GM12878 (cell line): ENCODE measurements at regions of chrX and their contacts with region 1.

Region 1: GRCh38 chrX:37825209-37825842 is 22.0 kb downstream of the DYNLT3 start:
- DNase-seq: no peak
- ATAC-seq: peak; percentile 89
- H3K4me3 ChIP-seq: no peak overlapping the region
- H3K27ac ChIP-seq: no peak overlapping the region
- H3K4me1 ChIP-seq: peaks cover 7% of the 10 kb centered on the region
- H3K27me3 ChIP-seq: no peaks in the 10 kb centered on the region
- CTCF ChIP-seq: peak; percentile 81 to 98 (median 96)
- EP300 ChIP-seq: no peak
- POLR2A ChIP-seq: no peak
- RAD21 ChIP-seq: peak; percentile 99

Region 2: DNA sequence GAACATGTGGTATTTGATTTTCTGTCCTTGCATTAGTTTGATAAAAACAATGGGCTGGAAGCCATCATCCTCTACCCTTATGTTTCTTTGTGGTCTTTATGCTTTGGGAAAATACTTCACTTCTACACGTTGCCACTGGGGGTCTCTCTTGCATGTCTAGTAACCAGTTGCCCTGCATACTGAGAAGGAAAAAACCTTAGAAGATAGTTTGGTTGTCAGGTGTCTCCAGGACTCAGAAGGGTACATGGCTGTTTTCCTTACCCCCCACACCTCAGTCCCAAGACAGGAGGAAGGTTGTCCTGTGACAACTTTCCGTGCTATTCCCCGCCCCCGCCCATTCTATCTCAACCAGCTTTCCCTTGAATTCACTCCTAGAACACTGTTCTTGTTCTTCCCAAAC is 316.0 kb before region 1 on chrX:
- CTCF ChIA-PET with region 1: interaction called, 9 read pairs
- POLR2A ChIA-PET with region 1: no interaction called
- RAD21 ChIA-PET with region 1: no interaction called
- SMC1A ChIA-PET with region 1: interaction called, 11 read pairs
- in situ Hi-C with region 1: no loop called
- intact Hi-C with region 1: loop called (anchors 2 kb)
- DNase-seq: no peak
- ATAC-seq: peak; percentile 72
- H3K4me3 ChIP-seq: no peak overlapping the region
- H3K27ac ChIP-seq: no peak overlapping the region
- H3K4me1 ChIP-seq: no peaks in the 10 kb centered on the region
- H3K27me3 ChIP-seq: no peaks in the 10 kb centered on the region
- CTCF ChIP-seq: peak; percentile 17 to 37 (median 26); a peak in 2 of 6 replicates
- EP300 ChIP-seq: no peak
- POLR2A ChIP-seq: no peak
- RAD21 ChIP-seq: no peak

Region 3: GRCh38 chrX:37755025-37755424 is 70.3 kb before region 1 on chrX:
- CTCF ChIA-PET with region 1: interaction called, 16 read pairs
- POLR2A ChIA-PET with region 1: no interaction called
- RAD21 ChIA-PET with region 1: interaction called, 4 read pairs
- SMC1A ChIA-PET with region 1: interaction called, 8 read pairs
- in situ Hi-C with region 1: no loop called
- intact Hi-C with region 1: no loop called
- DNase-seq: peak; percentile 67
- ATAC-seq: peak; percentile 92
- H3K4me3 ChIP-seq: peak overlapping the region; percentile 10; the same call in 1 of the 2 replicates
- H3K27ac ChIP-seq: peak overlapping the region; percentile 87
- H3K4me1 ChIP-seq: peaks cover 32% of the 10 kb centered on the region
- H3K27me3 ChIP-seq: no peaks in the 10 kb centered on the region
- CTCF ChIP-seq: no peak
- EP300 ChIP-seq: peak in 1 of 2 experiments; percentile 57; a peak in 1 of 4 replicates
- POLR2A ChIP-seq: no peak
- RAD21 ChIP-seq: no peak

Region 4: DNA sequence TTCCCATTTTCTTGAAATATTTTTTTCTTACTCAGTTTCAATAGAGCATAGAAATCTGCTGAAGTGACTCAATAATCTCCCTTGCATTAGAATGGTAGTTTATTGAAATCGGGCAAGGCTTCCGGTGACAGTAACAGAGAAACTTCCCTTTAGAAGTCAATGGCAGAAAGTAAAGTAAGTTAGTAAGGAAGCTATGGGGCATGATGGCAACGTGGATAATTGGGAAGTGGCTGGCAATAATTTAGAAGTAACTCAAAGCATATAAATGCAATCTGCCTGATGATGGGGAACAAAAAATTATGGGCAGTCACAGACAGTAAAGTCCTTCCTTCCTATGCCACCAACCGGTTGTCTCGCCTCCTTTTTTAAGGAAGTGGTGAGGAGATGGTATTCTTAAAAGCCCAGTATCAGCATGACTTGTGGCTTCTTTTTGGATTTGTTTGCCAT is 37.9 kb before region 1 on chrX:
- CTCF ChIA-PET with region 1: interaction called, 73 read pairs
- POLR2A ChIA-PET with region 1: interaction called, 3 read pairs
- RAD21 ChIA-PET with region 1: interaction called, 29 read pairs
- SMC1A ChIA-PET with region 1: interaction called, 138 read pairs
- in situ Hi-C with region 1: no loop called
- intact Hi-C with region 1: loop called (anchors 2 kb)
- DNase-seq: no peak
- ATAC-seq: peak; percentile 62
- H3K4me3 ChIP-seq: peak overlapping the region; percentile 33
- H3K27ac ChIP-seq: peak overlapping the region; percentile 85
- H3K4me1 ChIP-seq: no peaks in the 10 kb centered on the region; the same call in 1 of the 2 replicates
- H3K27me3 ChIP-seq: no peaks in the 10 kb centered on the region
- CTCF ChIP-seq: no peak
- EP300 ChIP-seq: peak in 1 of 2 experiments; percentile 64; a peak in 1 of 4 replicates
- POLR2A ChIP-seq: no peak
- RAD21 ChIP-seq: no peak

Region 5: DNA sequence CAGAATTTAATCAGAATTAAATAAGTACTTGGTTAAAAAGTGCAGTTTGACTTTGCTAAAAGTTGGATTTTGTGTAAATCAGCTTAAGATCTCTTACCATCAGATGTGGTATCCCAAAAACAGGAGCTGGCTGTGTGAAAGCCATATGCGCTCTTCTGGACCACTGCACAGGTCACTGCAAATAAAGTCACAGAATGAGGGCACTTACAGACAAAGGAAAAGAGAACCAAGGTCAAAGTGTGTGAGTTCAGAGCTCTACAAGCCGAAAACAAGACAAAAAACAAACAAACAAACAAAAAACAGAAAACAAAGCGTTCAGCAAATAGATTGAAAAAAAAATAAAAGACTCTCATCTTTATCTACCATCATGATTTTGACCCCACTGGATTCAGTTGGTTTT is 15.6 kb after region 1 on chrX:
- CTCF ChIA-PET with region 1: interaction called, 29 read pairs
- POLR2A ChIA-PET with region 1: no interaction called
- RAD21 ChIA-PET with region 1: no interaction called
- SMC1A ChIA-PET with region 1: interaction called, 31 read pairs
- in situ Hi-C with region 1: no loop called
- intact Hi-C with region 1: no loop called
- DNase-seq: no peak
- ATAC-seq: no peak
- H3K4me3 ChIP-seq: no peak overlapping the region
- H3K27ac ChIP-seq: no peak overlapping the region
- H3K4me1 ChIP-seq: no peaks in the 10 kb centered on the region
- H3K27me3 ChIP-seq: no peaks in the 10 kb centered on the region
- CTCF ChIP-seq: no peak
- EP300 ChIP-seq: no peak
- POLR2A ChIP-seq: no peak
- RAD21 ChIP-seq: no peak

Region 6: GRCh38 chrX:37873220-37873619 is 47.9 kb after region 1 on chrX:
- CTCF ChIA-PET with region 1: no interaction called
- POLR2A ChIA-PET with region 1: no interaction called
- RAD21 ChIA-PET with region 1: no interaction called
- SMC1A ChIA-PET with region 1: no interaction called
- in situ Hi-C with region 1: no loop called
- intact Hi-C with region 1: no loop called
- DNase-seq: no peak
- ATAC-seq: no peak
- H3K4me3 ChIP-seq: no peak overlapping the region
- H3K27ac ChIP-seq: no peak overlapping the region
- H3K4me1 ChIP-seq: no peaks in the 10 kb centered on the region
- H3K27me3 ChIP-seq: no peaks in the 10 kb centered on the region; a peak in 1 of 4 replicates
- CTCF ChIP-seq: no peak
- EP300 ChIP-seq: no peak
- POLR2A ChIP-seq: no peak
- RAD21 ChIP-seq: no peak

Region 7: DNA sequence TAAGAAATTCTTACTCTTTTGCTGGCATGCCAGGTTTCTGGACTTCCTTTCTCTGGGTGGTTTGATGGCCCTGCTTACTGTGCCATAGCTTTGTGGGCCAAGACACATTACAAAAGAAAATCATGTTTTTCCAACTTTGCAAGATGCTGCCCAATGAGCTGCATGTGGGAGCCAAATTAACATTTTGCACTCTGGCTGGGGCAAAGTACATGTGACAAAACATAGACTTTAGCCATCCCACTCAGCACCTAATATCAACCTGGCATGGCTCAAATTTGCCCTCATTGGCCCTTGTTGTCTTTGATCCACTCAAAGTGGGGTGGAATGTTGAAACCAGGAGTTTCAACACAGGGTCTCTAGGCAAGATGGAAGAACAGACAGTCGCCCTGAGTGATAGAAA is 62.0 kb after region 1 on chrX:
- CTCF ChIA-PET with region 1: no interaction called
- POLR2A ChIA-PET with region 1: no interaction called
- RAD21 ChIA-PET with region 1: no interaction called
- SMC1A ChIA-PET with region 1: no interaction called
- in situ Hi-C with region 1: no loop called
- intact Hi-C with region 1: no loop called
- DNase-seq: no peak
- ATAC-seq: no peak
- H3K4me3 ChIP-seq: no peak overlapping the region
- H3K27ac ChIP-seq: no peak overlapping the region
- H3K4me1 ChIP-seq: no peaks in the 10 kb centered on the region
- H3K27me3 ChIP-seq: no peaks in the 10 kb centered on the region
- CTCF ChIP-seq: no peak
- EP300 ChIP-seq: no peak
- POLR2A ChIP-seq: no peak
- RAD21 ChIP-seq: no peak

Region 8: GRCh38 chrX:38175140-38175539 is 349.8 kb after region 1 on chrX:
- CTCF ChIA-PET with region 1: interaction called, 3 read pairs
- POLR2A ChIA-PET with region 1: no interaction called
- RAD21 ChIA-PET with region 1: interaction called, 4 read pairs
- SMC1A ChIA-PET with region 1: interaction called, 3 read pairs
- in situ Hi-C with region 1: no loop called
- intact Hi-C with region 1: loop called (anchors 10 kb)
- DNase-seq: peak; percentile 3
- ATAC-seq: peak; percentile 81
- H3K4me3 ChIP-seq: no peak overlapping the region
- H3K27ac ChIP-seq: no peak overlapping the region
- H3K4me1 ChIP-seq: no peaks in the 10 kb centered on the region
- H3K27me3 ChIP-seq: no peaks in the 10 kb centered on the region; a peak in 1 of 4 replicates
- CTCF ChIP-seq: peak; percentile 47 to 61 (median 55)
- EP300 ChIP-seq: no peak
- POLR2A ChIP-seq: no peak
- RAD21 ChIP-seq: peak; percentile 69